ENCODE measurements at regions of chr17 and their contacts with region 1.

Region 1: GRCh38 chr17:51120739-51121617 is at the start of gene SPAG9:
- DNase-seq: peak; percentile 97
- total RNA-seq, gene SPAG9: 57.8 TPM

Region 2: GRCh38 chr17:50707289-50708049 is 413.5 kb before region 1 on chr17 and contains the start of gene ANKRD40:
- intact Hi-C with region 1: loop called (anchors 5 kb)
- DNase-seq: peak; percentile 96
- total RNA-seq, gene ANKRD40: 47.6 TPM

Region 3: GRCh38 chr17:50865984-50866774 is 254.8 kb before region 1 on chr17 and contains the start of gene TOB1:
- intact Hi-C with region 1: loop called (anchors 10 kb)
- DNase-seq: peak; percentile 99
- total RNA-seq, gene TOB1: 71.1 TPM

Region 4: DNA sequence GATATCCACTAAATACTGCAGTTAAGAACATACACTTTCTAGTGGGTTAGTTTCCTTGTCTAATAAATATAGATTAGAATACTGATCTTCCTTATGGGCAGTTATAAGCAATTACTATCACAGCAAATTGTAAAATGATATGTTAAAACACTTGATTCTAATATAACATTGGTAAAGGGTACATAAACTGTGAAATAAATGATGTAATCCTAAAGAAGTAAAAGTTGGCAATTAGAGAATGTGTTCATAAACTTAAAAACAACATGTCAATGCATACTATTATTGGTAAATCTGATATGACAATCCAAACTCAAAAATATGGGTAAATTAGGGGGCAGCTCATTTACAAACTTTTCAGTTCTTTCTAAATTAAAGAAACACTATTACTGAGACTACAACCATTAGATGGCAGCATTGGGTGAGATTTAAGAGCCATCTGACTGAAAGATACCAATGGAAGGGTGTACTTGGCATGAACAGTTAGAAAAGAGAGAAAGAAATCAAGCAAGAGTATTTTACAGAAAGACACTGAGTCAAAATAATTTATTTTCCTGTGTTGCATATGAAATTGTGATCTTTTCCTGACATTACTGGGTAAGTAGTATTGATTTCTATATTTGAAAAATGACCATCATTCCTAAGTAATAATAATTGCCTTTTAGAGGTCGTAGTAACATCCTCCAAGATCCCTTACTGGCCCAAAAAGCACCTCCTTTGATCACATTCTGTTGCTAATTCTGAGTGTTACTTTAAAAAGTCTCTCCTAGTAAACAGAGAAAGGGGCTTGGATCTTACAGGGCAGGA is 119.9 kb before region 1 on chr17:
- intact Hi-C with region 1: loop called (anchors 10 kb)
- DNase-seq: no peak

Region 5: GRCh38 chr17:51153210-51154072 is 32.5 kb after region 1 on chr17 and contains the start of gene NME1:
- intact Hi-C with region 1: loop called (anchors 1 kb)
- DNase-seq: peak; percentile 99
- total RNA-seq, gene NME1: 23.2 TPM